ENCODE measurements at regions of chr19 and their contacts with region 1.

Region 1: GRCh38 chr19:43595999-43596841 is at the starts of genes IRGQ and ZNF576:
- DNase-seq: peak; percentile 98
- ATAC-seq: peak; percentile 86
- H3K4me3 ChIP-seq: peak within 1 kb of the TSS; percentile 93
- H3K27ac ChIP-seq: peak within 1 kb of the TSS; percentile 85
- H3K4me1 ChIP-seq: peaks cover 7% of the 10 kb centered on the region; the same call in 1 of the 2 replicates
- H3K27me3 ChIP-seq: no peaks in the 10 kb centered on the region
- CTCF ChIP-seq: peak in 1 of 3 experiments; percentile 12; a peak in 1 of 6 replicates
- EP300 ChIP-seq: no peak
- POLR2A ChIP-seq: peak; percentile 48
- RAD21 ChIP-seq: no peak
- polyA plus RNA-seq, gene IRGQ: 3.3 to 10.7 TPM
- polyA plus RNA-seq, gene ZNF576: 13.2 to 15.2 TPM

Region 2: DNA sequence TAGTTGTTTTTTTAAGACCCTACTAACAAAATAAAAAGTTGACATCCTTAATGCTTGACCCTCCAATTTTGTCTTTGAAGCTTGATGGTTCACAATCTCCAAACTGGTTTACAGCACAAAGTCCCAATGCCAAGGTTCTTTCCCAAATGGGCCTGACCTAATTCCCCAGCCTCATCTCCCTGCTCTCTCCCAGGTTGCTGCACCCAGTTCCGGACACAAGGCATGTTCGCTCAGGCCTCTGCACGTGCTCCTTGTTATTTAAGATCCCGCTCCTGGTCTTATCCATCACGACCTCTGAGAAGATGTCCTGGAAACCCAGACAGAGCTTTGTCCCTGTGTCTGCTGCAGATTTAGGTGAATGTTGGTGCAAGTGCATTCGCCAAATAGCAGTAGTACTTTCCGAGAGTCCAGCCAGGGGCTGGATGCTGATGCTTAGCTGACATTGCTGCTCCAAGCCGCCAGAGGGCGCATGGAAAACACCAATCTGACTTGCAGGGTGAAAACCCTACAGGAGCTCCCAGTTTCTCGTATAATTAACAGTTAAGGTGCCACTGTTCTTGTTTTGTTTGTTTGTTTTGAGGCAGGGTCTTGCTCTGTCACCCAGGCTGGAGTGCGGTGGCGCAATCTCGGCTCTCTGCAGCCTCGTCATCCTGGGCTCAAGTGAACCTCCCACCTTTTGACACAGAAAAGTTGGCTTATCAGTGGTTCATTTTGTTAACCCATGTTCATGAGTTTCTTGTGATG is 149.3 kb before region 1 on chr19:
- CTCF ChIA-PET with region 1: interaction called, 64 read pairs
- POLR2A ChIA-PET with region 1: no interaction called
- RAD21 ChIA-PET with region 1: interaction called, 30 read pairs
- SMC1A ChIA-PET with region 1: interaction called, 34 read pairs
- in situ Hi-C with region 1: no loop called
- intact Hi-C with region 1: loop called (anchors 1 kb)
- DNase-seq: no peak
- ATAC-seq: peak; percentile 91
- H3K4me3 ChIP-seq: no peak overlapping the region
- H3K27ac ChIP-seq: no peak overlapping the region
- H3K4me1 ChIP-seq: no peaks in the 10 kb centered on the region
- H3K27me3 ChIP-seq: peaks cover 0 to 2% of the 10 kb centered on the region in 2 experiments; a peak in 1 of 4 replicates
- CTCF ChIP-seq: peak; percentile 90 to 96 (median 91); a peak in 5 of 6 replicates
- EP300 ChIP-seq: no peak
- POLR2A ChIP-seq: no peak
- RAD21 ChIP-seq: peak; percentile 94

Region 3: GRCh38 chr19:43526884-43527859 is 69.0 kb before region 1 on chr19 and contains the start of gene ETHE1:
- CTCF ChIA-PET with region 1: interaction called, 37 read pairs
- POLR2A ChIA-PET with region 1: interaction called, 13 read pairs
- RAD21 ChIA-PET with region 1: interaction called, 29 read pairs
- SMC1A ChIA-PET with region 1: interaction called, 9 read pairs
- in situ Hi-C with region 1: no loop called
- intact Hi-C with region 1: loop called (anchors 2 kb)
- DNase-seq: no peak
- ATAC-seq: peak; percentile 95
- H3K4me3 ChIP-seq: peak within 1 kb of the TSS; percentile 91
- H3K27ac ChIP-seq: peak within 1 kb of the TSS; percentile 65
- H3K4me1 ChIP-seq: peaks cover 3% of the 10 kb centered on the region; the same call in 1 of the 2 replicates
- H3K27me3 ChIP-seq: no peaks in the 10 kb centered on the region
- CTCF ChIP-seq: no peak
- EP300 ChIP-seq: no peak
- POLR2A ChIP-seq: peak; percentile 87
- RAD21 ChIP-seq: no peak
- polyA plus RNA-seq, gene ETHE1: 22.1 to 40.7 TPM

Region 4: GRCh38 chr19:43562698-43563241 is 33.5 kb before region 1 on chr19:
- CTCF ChIA-PET with region 1: interaction called, 169 read pairs
- POLR2A ChIA-PET with region 1: no interaction called
- RAD21 ChIA-PET with region 1: interaction called, 11 read pairs
- SMC1A ChIA-PET with region 1: interaction called, 7 read pairs
- in situ Hi-C with region 1: no loop called
- intact Hi-C with region 1: no loop called
- DNase-seq: peak; percentile 91
- ATAC-seq: peak; percentile 92
- H3K4me3 ChIP-seq: no peak overlapping the region
- H3K27ac ChIP-seq: peak overlapping the region; percentile 62
- H3K4me1 ChIP-seq: peaks cover 12% of the 10 kb centered on the region
- H3K27me3 ChIP-seq: no peaks in the 10 kb centered on the region
- CTCF ChIP-seq: no peak
- EP300 ChIP-seq: no peak
- POLR2A ChIP-seq: no peak; the same call in 1 of the 2 replicates
- RAD21 ChIP-seq: no peak

Region 5: DNA sequence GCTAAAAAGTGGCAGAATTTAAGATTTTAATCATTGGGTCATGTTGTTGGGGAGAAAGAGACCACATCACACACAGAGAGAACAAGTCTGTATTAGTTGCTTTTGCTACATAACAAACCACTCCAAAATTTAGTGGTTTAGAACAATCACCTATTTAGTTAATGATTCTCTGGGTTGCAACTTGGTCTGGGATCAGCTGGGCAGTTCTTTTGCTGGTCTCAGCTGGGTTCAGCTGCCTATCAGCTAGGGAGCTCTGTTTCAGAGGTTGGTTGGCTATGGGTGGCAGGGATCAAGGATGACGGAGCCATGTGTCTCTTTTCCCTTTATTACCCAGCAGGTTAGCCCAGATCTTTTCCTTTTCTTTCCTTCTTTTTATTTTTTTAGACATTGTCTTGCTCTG is 11.7 kb before region 1 on chr19:
- CTCF ChIA-PET with region 1: interaction called, 52 read pairs
- POLR2A ChIA-PET with region 1: interaction called, 3 read pairs
- RAD21 ChIA-PET with region 1: interaction called, 18 read pairs
- SMC1A ChIA-PET with region 1: interaction called, 15 read pairs
- in situ Hi-C with region 1: no loop called
- intact Hi-C with region 1: no loop called
- DNase-seq: no peak
- ATAC-seq: peak; percentile 75
- H3K4me3 ChIP-seq: no peak overlapping the region
- H3K27ac ChIP-seq: no peak overlapping the region
- H3K4me1 ChIP-seq: peaks cover 5% of the 10 kb centered on the region
- H3K27me3 ChIP-seq: no peaks in the 10 kb centered on the region
- CTCF ChIP-seq: no peak
- EP300 ChIP-seq: no peak
- POLR2A ChIP-seq: no peak
- RAD21 ChIP-seq: no peak

Region 6: DNA sequence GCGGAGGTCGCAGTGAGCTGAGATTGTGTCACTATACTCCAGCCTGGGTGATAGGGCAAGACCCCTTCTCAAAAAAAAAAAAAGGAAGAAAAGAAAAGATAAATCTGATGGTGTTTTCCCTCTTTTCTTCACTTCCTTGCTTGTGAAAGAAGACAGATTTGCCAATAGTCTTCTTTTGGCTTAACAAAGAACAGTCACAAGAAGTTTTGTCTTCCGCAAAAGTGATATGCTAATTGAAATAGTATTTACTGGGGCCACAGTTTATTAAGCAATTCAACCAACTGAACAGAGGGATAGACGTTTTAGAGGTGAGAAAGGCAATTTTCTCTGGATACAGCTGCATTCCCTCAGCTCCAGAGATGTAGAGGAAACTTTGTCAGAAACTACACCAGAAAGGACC is 96.7 kb after region 1 on chr19:
- CTCF ChIA-PET with region 1: no interaction called
- POLR2A ChIA-PET with region 1: no interaction called
- RAD21 ChIA-PET with region 1: no interaction called
- SMC1A ChIA-PET with region 1: no interaction called
- in situ Hi-C with region 1: no loop called
- intact Hi-C with region 1: no loop called
- DNase-seq: no peak
- ATAC-seq: no peak
- H3K4me3 ChIP-seq: no peak overlapping the region
- H3K27ac ChIP-seq: no peak overlapping the region
- H3K4me1 ChIP-seq: no peaks in the 10 kb centered on the region
- H3K27me3 ChIP-seq: no peaks in the 10 kb centered on the region; a peak in 1 of 4 replicates
- CTCF ChIP-seq: no peak
- EP300 ChIP-seq: no peak
- POLR2A ChIP-seq: no peak
- RAD21 ChIP-seq: no peak

Region 7: GRCh38 chr19:43711751-43712355 is 115.6 kb after region 1 on chr19:
- CTCF ChIA-PET with region 1: no interaction called
- POLR2A ChIA-PET with region 1: no interaction called
- RAD21 ChIA-PET with region 1: no interaction called
- SMC1A ChIA-PET with region 1: no interaction called
- in situ Hi-C with region 1: no loop called
- intact Hi-C with region 1: no loop called
- DNase-seq: no peak
- ATAC-seq: no peak
- H3K4me3 ChIP-seq: no peak overlapping the region
- H3K27ac ChIP-seq: no peak overlapping the region
- H3K4me1 ChIP-seq: no peaks in the 10 kb centered on the region
- H3K27me3 ChIP-seq: no peaks in the 10 kb centered on the region
- CTCF ChIP-seq: no peak
- EP300 ChIP-seq: no peak
- POLR2A ChIP-seq: no peak
- RAD21 ChIP-seq: no peak

Region 8: GRCh38 chr19:43784981-43785808 is 189.0 kb after region 1 on chr19:
- CTCF ChIA-PET with region 1: interaction called, 3 read pairs
- POLR2A ChIA-PET with region 1: no interaction called
- RAD21 ChIA-PET with region 1: interaction called, 3 read pairs
- SMC1A ChIA-PET with region 1: interaction called, 3 read pairs
- in situ Hi-C with region 1: no loop called
- intact Hi-C with region 1: loop called (anchors 2 kb)
- DNase-seq: no peak
- ATAC-seq: peak; percentile 70
- H3K4me3 ChIP-seq: no peak overlapping the region
- H3K27ac ChIP-seq: peak overlapping the region; percentile 74
- H3K4me1 ChIP-seq: peaks cover 49% of the 10 kb centered on the region
- H3K27me3 ChIP-seq: no peaks in the 10 kb centered on the region
- CTCF ChIP-seq: peak; percentile 98 to 100 (median 100); a peak in 5 of 6 replicates
- EP300 ChIP-seq: no peak
- POLR2A ChIP-seq: no peak
- RAD21 ChIP-seq: peak; percentile 95